H1 (cell line): ENCODE measurements at regions of chr6 and their contacts with region 1.

Region 1: GRCh38 chr6:108168501-108169463 is 3.0 kb downstream of the NR2E1 start:
- DNase-seq: peak in 1 of 2 experiments; percentile 77
- H3K4me3 ChIP-seq: peak overlapping the region in 3 of 4 experiments; percentile 9 to 49 (median 34); a peak in 4 of 8 replicates
- H3K27ac ChIP-seq: no peak overlapping the region
- H3K4me1 ChIP-seq: peaks cover 7 to 54% (median 37%) of the 10 kb centered on the region in 4 experiments
- H3K27me3 ChIP-seq: peaks cover 93 to 100% (median 97%) of the 10 kb centered on the region in 4 experiments
- CTCF ChIP-seq: peak in 2 of 3 experiments; percentile 23 to 34; a peak in 3 of 4 replicates
- EP300 ChIP-seq: no peak
- POLR2A ChIP-seq: no peak
- RAD21 ChIP-seq: peak in 1 of 2 experiments; percentile 22; a peak in 1 of 4 replicates

Region 2: GRCh38 chr6:108157234-108157980 is 11.4 kb before region 1 on chr6:
- CTCF ChIA-PET with region 1: interaction called, 19 read pairs
- POLR2A ChIA-PET with region 1: interaction called, 19 read pairs
- DNase-seq: peak in 1 of 2 experiments; percentile 64
- H3K4me3 ChIP-seq: peak overlapping the region in 2 of 4 experiments; percentile 12 to 50; a peak in 3 of 8 replicates
- H3K27ac ChIP-seq: no peak overlapping the region
- H3K4me1 ChIP-seq: peaks cover 6 to 14% (median 10%) of the 10 kb centered on the region in 4 experiments; a peak in 6 of 7 replicates
- H3K27me3 ChIP-seq: peaks cover 70 to 89% (median 81%) of the 10 kb centered on the region in 4 experiments
- CTCF ChIP-seq: no peak
- EP300 ChIP-seq: no peak
- POLR2A ChIP-seq: no peak
- RAD21 ChIP-seq: no peak